ENCODE measurements at regions of chr11 and their contacts with region 1.

Region 1: DNA sequence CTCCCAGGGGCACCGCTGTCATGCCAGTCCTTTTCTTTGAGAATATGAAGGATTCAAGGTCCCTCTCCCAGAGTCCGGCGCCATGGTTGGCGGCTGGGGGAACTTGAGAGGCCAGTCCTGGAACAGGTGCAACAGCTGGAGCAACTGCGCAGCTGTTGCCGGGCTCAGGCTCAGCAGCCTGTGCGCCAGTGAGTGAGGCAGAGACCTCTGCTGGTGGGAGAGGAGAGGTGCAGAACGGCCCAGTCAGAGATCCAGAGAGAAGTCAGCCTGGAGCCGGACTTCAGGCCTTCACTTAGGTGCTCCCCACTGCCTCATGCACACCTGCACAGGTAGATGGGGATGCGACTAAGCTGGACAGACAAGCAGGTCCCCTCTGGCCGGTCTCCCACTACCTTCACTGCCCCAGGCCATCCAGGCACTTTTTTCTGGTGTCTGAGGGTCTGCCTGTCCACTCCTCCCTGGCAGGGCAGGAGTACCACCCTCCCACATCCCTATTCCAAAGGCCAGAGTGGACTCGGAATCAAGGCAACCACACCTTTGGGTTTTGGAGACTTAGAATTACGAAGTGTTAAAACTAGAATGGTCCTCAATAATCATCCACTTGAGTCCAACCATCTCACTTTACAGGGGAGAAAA is 4.6 kb downstream of the CHRDL2 start:
- DNase-seq: peak; percentile 68 to 70
- ATAC-seq: peak; percentile 84 to 93 (median 91)
- H3K4me3 ChIP-seq: no peak overlapping the region
- H3K27ac ChIP-seq: peak overlapping the region in 3 of 10 donors; percentile 24 to 61 (median 56)
- H3K4me1 ChIP-seq: peaks cover 3 to 24% (median 18%) of the 10 kb centered on the region in 9 donors
- H3K27me3 ChIP-seq: peaks cover 0 to 31% (median 16%) of the 10 kb centered on the region in 7 donors
- CTCF ChIP-seq: peak; percentile 79 to 95 (median 94)

Region 2: DNA sequence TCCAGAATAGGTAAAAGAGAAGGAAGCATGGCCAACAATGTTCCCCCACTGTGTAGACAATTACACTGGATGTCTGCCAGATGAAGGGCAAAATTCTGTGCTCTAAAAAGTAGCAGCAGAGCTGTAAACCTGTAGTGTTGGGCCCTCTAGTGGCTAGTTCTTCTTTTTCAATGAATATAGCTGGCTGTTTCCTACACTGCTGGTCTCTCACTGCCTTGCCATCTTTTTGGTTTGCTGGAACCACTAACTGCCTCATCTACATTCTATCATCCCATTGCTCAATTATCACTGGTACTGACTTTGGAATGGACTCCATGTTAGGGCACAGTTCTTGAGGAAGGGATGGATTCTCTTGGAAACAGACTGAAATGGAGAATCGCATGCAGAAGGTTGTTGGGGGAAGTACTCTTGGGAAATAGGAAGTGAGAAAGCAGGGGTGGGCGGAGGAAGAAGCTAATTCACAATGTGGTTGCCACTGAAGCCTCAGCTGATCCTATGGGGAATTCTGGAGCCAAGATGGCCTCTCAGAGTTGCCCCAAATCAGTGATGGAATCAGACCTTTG is 277.2 kb before region 1 on chr11:
- intact Hi-C with region 1: loop called in 1 of 10 experiments (anchors 10 kb)
- DNase-seq: peak in 1 of 2 donors; percentile 77
- ATAC-seq: peak; percentile 74 to 91 (median 86)
- H3K4me3 ChIP-seq: no peak overlapping the region
- H3K27ac ChIP-seq: peak overlapping the region in 1 of 10 donors; percentile 49
- H3K4me1 ChIP-seq: peaks cover 0 to 19% (median 0%) of the 10 kb centered on the region in 9 donors
- H3K27me3 ChIP-seq: no peaks in the 10 kb centered on the region
- CTCF ChIP-seq: peak; percentile 51 to 80 (median 75)

Region 3: GRCh38 chr11:74581954-74582547 is 144.6 kb before region 1 on chr11:
- intact Hi-C with region 1: no loop called
- DNase-seq: no peak
- ATAC-seq: peak in 1 of 8 donors; percentile 22
- H3K4me3 ChIP-seq: no peak overlapping the region
- H3K27ac ChIP-seq: peak overlapping the region in 1 of 10 donors; percentile 84
- H3K4me1 ChIP-seq: peaks cover 0 to 22% (median 0%) of the 10 kb centered on the region in 9 donors
- H3K27me3 ChIP-seq: no peaks in the 10 kb centered on the region
- CTCF ChIP-seq: no peak

Region 4: DNA sequence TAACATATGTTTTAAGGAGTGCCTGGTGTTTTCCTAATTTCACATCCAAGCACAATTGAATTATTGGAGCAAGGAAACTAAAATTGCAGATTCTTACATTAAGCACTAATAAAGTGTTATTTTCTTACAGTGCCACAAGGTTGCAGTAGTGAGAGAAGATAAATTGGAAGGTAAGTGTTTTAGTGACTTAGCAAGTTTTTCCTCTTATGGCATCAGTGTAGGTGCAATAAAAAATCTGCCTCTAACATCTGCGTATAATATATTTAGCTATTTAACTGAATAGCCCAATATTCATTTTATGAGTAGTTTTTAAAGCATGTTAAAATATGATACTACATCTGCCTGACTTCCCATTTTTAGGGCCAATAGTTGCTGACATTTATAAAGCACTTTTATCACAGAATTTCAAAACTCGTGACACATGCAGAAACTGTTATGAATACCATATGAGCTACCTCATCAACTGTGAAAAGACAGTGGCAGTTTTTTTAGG is 115.2 kb before region 1 on chr11:
- intact Hi-C with region 1: loop called in 1 of 10 experiments (anchors 5 kb)
- DNase-seq: no peak
- ATAC-seq: peak in 3 of 8 donors; percentile 28 to 52 (median 42)
- H3K4me3 ChIP-seq: no peak overlapping the region
- H3K27ac ChIP-seq: peak overlapping the region in 2 of 10 donors; percentile 4 to 84
- H3K4me1 ChIP-seq: peaks cover 0 to 21% (median 0%) of the 10 kb centered on the region in 9 donors
- H3K27me3 ChIP-seq: no peaks in the 10 kb centered on the region
- CTCF ChIP-seq: peak in 7 of 9 donors; percentile 30 to 61 (median 47)

Region 5: GRCh38 chr11:74634537-74634936 is 92.1 kb before region 1 on chr11:
- intact Hi-C with region 1: loop called in 9 of 10 experiments (anchors 1 to 5 kb)
- DNase-seq: no peak
- ATAC-seq: peak in 3 of 8 donors; percentile 47 to 81 (median 62)
- H3K4me3 ChIP-seq: no peak overlapping the region
- H3K27ac ChIP-seq: no peak overlapping the region
- H3K4me1 ChIP-seq: peaks cover 0 to 17% (median 0%) of the 10 kb centered on the region in 9 donors
- H3K27me3 ChIP-seq: no peaks in the 10 kb centered on the region
- CTCF ChIP-seq: peak in 7 of 9 donors; percentile 34 to 57 (median 40)

Region 6: DNA sequence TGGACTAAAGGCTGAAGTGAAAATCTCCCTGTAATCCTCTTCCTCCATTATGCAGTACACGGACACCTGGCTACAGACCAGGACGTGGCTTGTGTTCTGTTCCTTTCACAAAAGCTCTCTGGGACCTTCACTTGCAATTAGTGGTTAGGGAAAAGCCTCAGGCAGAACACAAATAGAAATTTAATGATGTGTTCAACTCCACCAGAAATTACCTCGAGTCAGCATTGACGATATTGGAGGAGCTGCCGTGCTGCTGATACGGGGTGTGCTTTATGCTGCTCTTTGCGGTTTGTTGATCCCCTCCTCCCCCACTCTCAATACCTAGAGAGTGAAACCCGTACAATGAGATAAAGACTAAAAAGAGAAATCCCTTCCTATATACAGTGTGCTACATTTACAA is 85.4 kb before region 1 on chr11:
- intact Hi-C with region 1: loop called in 6 of 10 experiments (anchors 5 to 10 kb)
- DNase-seq: no peak
- ATAC-seq: no peak
- H3K4me3 ChIP-seq: no peak overlapping the region
- H3K27ac ChIP-seq: no peak overlapping the region
- H3K4me1 ChIP-seq: peaks cover 0 to 8% (median 0%) of the 10 kb centered on the region in 9 donors
- H3K27me3 ChIP-seq: no peaks in the 10 kb centered on the region
- CTCF ChIP-seq: no peak

Region 7: DNA sequence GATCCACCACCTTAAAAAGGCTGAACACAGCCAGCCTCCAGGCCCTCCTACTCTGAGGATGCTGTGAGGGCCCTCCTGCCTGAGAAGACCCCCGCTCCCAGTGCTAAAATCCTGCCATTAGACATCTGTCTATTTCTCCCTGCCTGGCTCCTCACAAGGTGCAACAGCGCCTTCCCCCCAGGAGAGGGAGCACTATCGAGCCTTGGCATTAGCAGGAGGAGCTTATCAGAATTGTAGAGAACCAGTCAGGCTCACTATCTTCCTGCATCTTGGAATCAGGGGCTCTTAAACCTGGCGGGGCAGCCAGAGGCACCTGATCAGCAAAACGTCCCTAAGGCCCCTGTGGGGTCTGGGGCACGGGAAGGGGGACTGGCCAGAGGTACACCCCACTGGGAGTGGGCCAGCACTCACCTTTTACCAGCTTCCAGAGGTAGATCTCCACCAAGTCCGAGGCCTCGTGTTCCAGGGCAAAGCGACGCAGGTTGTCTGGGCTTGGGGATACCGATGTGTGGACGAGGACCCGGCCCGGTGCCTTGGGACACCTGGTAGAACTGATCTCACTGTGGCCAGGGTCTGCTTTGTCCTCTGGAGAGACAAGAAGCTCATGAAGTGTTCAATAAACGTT is 24.2 kb before region 1 on chr11:
- intact Hi-C with region 1: loop called in 1 of 10 experiments (anchors 2 kb)
- DNase-seq: peak; percentile 56 to 60
- ATAC-seq: peak; percentile 29 to 76 (median 57)
- H3K4me3 ChIP-seq: no peak overlapping the region
- H3K27ac ChIP-seq: no peak overlapping the region
- H3K4me1 ChIP-seq: peaks cover 0 to 10% (median 5%) of the 10 kb centered on the region in 9 donors
- H3K27me3 ChIP-seq: no peaks in the 10 kb centered on the region
- CTCF ChIP-seq: peak; percentile 77 to 94 (median 90)

Region 8: DNA sequence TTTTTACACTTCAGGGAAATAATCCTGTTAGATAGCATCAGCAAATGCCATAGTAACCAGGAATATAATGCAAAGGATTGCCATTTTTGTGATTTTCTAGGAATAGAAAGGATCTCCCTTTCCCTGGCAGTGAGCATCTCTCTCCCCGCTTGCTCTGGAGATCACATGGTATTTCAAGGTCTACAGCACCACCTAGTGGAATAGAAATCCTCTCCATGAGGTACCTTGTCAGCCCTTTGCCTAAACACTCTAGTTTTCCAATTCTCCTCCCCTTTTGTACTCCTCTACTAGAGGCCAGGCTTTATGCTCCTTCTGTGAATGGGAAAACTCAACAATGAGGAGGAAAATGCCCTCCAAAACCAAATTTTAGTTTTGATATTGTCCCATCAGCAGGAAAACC is 143.8 kb after region 1 on chr11:
- intact Hi-C with region 1: no loop called
- DNase-seq: no peak
- ATAC-seq: no peak
- H3K4me3 ChIP-seq: no peak overlapping the region
- H3K27ac ChIP-seq: no peak overlapping the region
- H3K4me1 ChIP-seq: no peaks in the 10 kb centered on the region
- H3K27me3 ChIP-seq: no peaks in the 10 kb centered on the region
- CTCF ChIP-seq: peak in 3 of 9 donors; percentile 9 to 38 (median 13)

Region 9: GRCh38 chr11:75204685-75205563 is 478.3 kb after region 1 on chr11:
- intact Hi-C with region 1: no loop called
- DNase-seq: peak; percentile 89 to 90
- ATAC-seq: peak; percentile 93 to 97 (median 96)
- H3K4me3 ChIP-seq: no peak overlapping the region
- H3K27ac ChIP-seq: peak overlapping the region in 2 of 10 donors; percentile 9 to 48
- H3K4me1 ChIP-seq: peaks cover 0 to 12% (median 3%) of the 10 kb centered on the region in 9 donors
- H3K27me3 ChIP-seq: peaks cover 0 to 3% (median 0%) of the 10 kb centered on the region in 7 donors
- CTCF ChIP-seq: peak; percentile 84 to 95 (median 93)

Measured in heart right ventricle (tissue), 16 donors.